ENCODE measurements at regions of chr11 and their contacts with region 1.

Region 1: DNA sequence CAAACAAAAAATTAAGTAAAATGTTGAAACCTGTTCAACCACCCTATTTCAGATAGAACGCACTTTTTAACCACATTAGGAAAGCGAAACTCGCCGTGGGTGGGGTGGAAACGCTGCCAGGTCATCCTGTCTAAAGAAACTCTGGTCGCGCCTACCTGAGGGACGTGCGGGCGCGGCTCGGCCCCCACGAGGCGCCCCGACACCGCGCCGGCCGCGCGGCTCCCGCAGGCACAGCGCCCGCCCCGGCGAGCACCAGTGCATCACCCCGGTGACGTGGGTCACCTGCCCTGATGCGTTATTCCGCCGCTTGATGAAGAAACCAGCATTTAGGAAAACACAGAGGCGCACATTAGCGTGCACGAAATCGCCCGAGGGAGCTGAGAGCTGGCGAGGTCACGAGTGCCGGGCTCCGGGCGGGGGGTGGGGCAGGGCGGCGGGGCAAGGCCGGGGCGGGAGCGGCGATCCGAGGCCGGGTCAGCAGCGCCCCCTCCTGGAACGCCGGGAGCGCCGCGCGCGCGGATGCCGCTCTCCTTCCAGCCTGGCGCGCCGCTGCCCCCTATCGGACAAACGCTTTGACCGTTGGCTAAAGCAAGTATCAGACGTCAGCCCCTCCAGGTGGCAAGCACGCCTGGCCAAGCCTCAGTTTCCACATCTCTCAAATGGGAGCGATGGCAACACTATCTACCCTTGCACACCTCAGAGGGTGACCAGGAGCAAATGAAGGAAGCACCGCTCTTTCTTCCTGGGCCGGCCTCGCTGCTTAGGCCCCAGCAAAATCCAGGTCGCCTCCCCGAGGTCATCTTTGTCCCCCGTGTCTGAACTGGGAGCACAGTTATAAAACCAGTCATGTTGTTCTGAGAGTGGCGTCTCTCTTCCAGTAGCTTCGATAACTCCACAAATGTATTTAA is 15.7 kb upstream of the SNX32 start:
- DNase-seq: peak; percentile 95
- CTCF ChIP-seq: peak; percentile 100

Region 2: GRCh38 chr11:65711785-65712632 is 106.1 kb before region 1 on chr11 and contains the start of gene KAT5:
- CTCF ChIA-PET with region 1: interaction called, 50 read pairs
- POLR2A ChIA-PET with region 1: no interaction called
- DNase-seq: peak; percentile 92
- CTCF ChIP-seq: peak; percentile 96

Region 3: GRCh38 chr11:65726660-65727059 is 91.4 kb before region 1 on chr11:
- CTCF ChIA-PET with region 1: interaction called, 10 read pairs
- POLR2A ChIA-PET with region 1: no interaction called
- DNase-seq: no peak
- CTCF ChIP-seq: peak; percentile 5

Region 4: GRCh38 chr11:65802841-65803240 is 15.2 kb before region 1 on chr11:
- CTCF ChIA-PET with region 1: interaction called, 32 read pairs
- POLR2A ChIA-PET with region 1: no interaction called
- DNase-seq: peak; percentile 84
- CTCF ChIP-seq: no peak

Measured in GM10248 (cell line).